ENCODE measurements at regions of chr6 and their contacts with region 1.

Region 1: DNA sequence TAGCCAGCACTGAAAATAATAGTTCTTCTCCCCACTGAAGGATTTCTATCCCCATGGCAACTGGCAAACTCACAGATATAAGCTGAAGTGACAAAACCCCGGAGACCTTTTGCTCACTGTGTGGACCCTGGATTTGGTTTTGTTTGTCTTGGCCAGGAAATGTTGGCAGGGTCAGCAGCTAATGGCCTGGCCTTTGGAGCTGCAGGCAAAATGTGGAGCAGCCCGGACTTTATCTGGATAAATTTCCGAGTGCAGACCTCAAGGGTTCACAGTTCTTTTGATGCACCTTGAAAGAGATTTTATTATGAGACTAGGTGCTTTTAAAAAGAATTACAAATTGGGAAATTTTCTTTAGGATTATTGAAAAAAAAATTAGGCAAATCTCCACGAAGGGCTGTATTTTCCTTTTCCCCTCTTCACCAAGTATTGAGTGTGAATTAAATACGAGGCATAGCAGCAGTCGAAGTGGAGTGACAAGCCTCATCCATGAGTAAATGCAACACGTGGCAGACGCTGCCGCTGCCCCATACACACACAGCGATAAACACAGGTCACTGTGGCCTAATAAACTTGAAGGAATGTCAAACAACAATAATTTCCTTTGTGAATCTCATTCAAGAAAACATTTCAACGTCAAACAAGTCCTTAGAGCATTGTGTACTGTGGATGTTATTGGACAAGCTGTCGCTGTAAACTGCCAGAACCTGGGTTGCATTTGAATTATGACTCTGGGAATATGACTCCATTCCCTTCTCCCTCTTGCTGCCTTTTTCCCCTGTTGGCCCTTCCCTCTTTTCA is 35.1 kb upstream of the CCN6 start:
- DNase-seq: peak in 1 of 2 donors; percentile 79
- H3K4me3 ChIP-seq: peak overlapping the region in 1 of 2 donors; percentile 4
- H3K27ac ChIP-seq: peak overlapping the region; percentile 6 to 64
- H3K4me1 ChIP-seq: peaks cover 0 to 37% of the 10 kb centered on the region in 2 donors
- H3K27me3 ChIP-seq: no peaks in the 10 kb centered on the region
- CTCF ChIP-seq: no peak

Region 2: DNA sequence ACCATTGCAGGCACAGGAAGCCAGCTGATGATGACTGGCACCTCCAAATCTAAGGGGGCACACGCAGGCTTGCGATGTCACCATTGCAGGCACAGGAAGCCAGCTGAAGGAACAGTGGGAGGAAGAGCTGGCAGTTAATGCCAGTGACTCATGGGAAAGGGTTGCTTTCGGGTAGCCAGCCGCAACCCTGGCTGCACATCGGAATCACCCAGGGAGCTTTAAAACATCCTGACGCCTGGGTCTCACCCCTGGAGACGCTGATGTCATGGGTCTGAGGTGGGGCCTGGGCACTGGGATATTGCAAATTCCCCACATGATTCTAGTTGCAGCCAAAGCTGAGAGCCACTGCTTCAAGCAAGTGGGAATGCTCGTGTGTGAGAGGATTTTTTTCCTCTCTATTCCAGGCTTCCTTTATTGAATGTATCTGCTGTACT is 19.0 kb after region 1 on chr6:
- intact Hi-C with region 1: loop called (anchors 2 kb)
- DNase-seq: peak; percentile 54 to 96
- H3K4me3 ChIP-seq: no peak overlapping the region
- H3K27ac ChIP-seq: peak overlapping the region; percentile 83 to 93
- H3K4me1 ChIP-seq: peaks cover 5 to 29% of the 10 kb centered on the region in 2 donors
- H3K27me3 ChIP-seq: no peaks in the 10 kb centered on the region
- CTCF ChIP-seq: no peak

Measured in ascending aorta (tissue), 2 donors.